ENCODE measurements at regions of chr5 and their contacts with region 1.

Region 1: DNA sequence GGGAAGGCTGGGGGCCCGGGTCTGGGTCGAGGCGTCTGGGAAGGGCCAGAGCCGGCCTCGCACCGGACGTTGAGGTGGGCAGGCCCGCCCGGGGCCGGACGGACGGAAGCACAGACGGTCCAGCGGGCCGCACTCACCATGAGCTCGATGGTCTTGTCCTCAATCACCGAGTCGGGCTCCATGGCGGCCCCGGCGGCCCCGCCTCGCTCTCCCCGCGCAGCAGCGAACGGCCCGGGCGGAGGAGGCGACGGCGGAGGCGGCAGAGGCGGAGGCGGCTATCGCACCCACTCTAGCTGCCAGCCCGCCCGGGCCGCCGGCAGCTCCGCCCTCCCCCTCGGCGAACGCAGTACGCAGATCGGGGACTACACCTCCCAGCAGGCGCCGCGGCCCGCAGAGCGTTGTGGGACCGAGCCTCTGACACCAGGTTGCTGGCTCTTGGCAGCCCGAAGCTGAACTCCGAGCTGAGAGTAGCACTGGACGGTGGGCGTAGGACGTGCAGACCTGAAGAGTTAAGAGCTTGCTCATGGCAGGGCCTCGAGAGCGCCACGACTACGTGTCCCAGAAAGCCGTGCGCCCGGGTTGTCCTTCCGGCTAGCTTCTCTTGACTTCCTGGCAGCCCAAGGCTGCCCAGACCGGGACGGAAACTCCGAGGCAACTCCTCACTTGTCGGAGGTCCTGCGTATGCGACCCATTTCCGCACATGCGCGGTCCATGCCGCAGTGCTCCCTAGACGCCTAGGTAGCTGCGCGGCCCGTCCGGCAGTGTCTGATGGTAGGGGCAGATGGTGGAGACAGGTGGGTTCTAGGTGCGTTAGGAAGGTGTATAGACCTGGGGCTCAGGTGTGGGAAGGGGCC is at the start of gene FBXW11:
- DNase-seq: peak; percentile 85 to 96 (median 92)
- ATAC-seq: peak; percentile 94
- H3K4me3 ChIP-seq: peak within 1 kb of the TSS; percentile 89
- H3K4me3 Mint-ChIP-seq: peak within 1 kb of the TSS; percentile 93 to 99 (median 97)
- H3K27ac ChIP-seq: peak within 1 kb of the TSS; percentile 91
- H3K27ac Mint-ChIP-seq: peak within 1 kb of the TSS; percentile 94 to 100 (median 98)
- H3K4me1 ChIP-seq: peaks cover 33 to 36% of the 10 kb centered on the region in 2 donors
- H3K4me1 Mint-ChIP-seq: peaks cover 34 to 67% (median 56%) of the 10 kb centered on the region in 7 donors
- H3K27me3 ChIP-seq: no peaks in the 10 kb centered on the region
- H3K27me3 Mint-ChIP-seq: no peaks in the 10 kb centered on the region
- total RNA-seq, gene FBXW11: 29.1 to 40.7 (median 33.6) TPM

Region 2: GRCh38 chr5:171907725-171908343 is 98.7 kb before region 1 on chr5:
- CTCF ChIA-PET with region 1: interaction called, 11 read pairs
- POLR2A ChIA-PET with region 1: interaction called, 5 read pairs
- intact Hi-C with region 1: loop called (anchors 1 to 2 kb)
- DNase-seq: peak in 7 of 9 donors; percentile 9 to 55 (median 45)
- ATAC-seq: peak; percentile 88
- H3K4me3 ChIP-seq: no peak overlapping the region
- H3K4me3 Mint-ChIP-seq: no peak overlapping the region
- H3K27ac ChIP-seq: no peak overlapping the region
- H3K27ac Mint-ChIP-seq: peak overlapping the region in 3 of 9 donors; percentile 0 to 75 (median 50)
- H3K4me1 ChIP-seq: peaks cover 0 to 23% of the 10 kb centered on the region in 2 donors
- H3K4me1 Mint-ChIP-seq: peaks cover 25 to 54% (median 48%) of the 10 kb centered on the region in 7 donors
- H3K27me3 ChIP-seq: no peaks in the 10 kb centered on the region
- H3K27me3 Mint-ChIP-seq: no peaks in the 10 kb centered on the region

Region 3: GRCh38 chr5:172035039-172035438 is 28.5 kb after region 1 on chr5:
- CTCF ChIA-PET with region 1: interaction called, 6 read pairs
- POLR2A ChIA-PET with region 1: no interaction called
- intact Hi-C with region 1: loop called (anchors 1 to 5 kb)
- DNase-seq: no peak
- ATAC-seq: peak; percentile 27
- H3K4me3 ChIP-seq: no peak overlapping the region
- H3K4me3 Mint-ChIP-seq: peak overlapping the region in 1 of 10 donors; percentile 20
- H3K27ac ChIP-seq: no peak overlapping the region
- H3K27ac Mint-ChIP-seq: no peak overlapping the region
- H3K4me1 ChIP-seq: no peaks in the 10 kb centered on the region
- H3K4me1 Mint-ChIP-seq: peaks cover 0 to 16% (median 9%) of the 10 kb centered on the region in 7 donors
- H3K27me3 ChIP-seq: no peaks in the 10 kb centered on the region
- H3K27me3 Mint-ChIP-seq: no peaks in the 10 kb centered on the region

Region 4: GRCh38 chr5:172114875-172115422 is 108.4 kb after region 1 on chr5:
- CTCF ChIA-PET with region 1: no interaction called
- POLR2A ChIA-PET with region 1: interaction called, 3 read pairs
- intact Hi-C with region 1: loop called (anchors 2 kb)
- DNase-seq: peak; percentile 35 to 78 (median 44)
- ATAC-seq: peak; percentile 70
- H3K4me3 ChIP-seq: peak overlapping the region; percentile 50
- H3K4me3 Mint-ChIP-seq: peak overlapping the region; percentile 54 to 90 (median 80)
- H3K27ac ChIP-seq: peak overlapping the region; percentile 70
- H3K27ac Mint-ChIP-seq: peak overlapping the region; percentile 75 to 98 (median 94)
- H3K4me1 ChIP-seq: peaks cover 67 to 80% of the 10 kb centered on the region in 2 donors
- H3K4me1 Mint-ChIP-seq: peaks cover 48 to 86% (median 72%) of the 10 kb centered on the region in 7 donors
- H3K27me3 ChIP-seq: no peaks in the 10 kb centered on the region
- H3K27me3 Mint-ChIP-seq: no peaks in the 10 kb centered on the region

Region 5: GRCh38 chr5:172283020-172283861 is 276.7 kb after region 1 on chr5 and contains the start of gene UBTD2:
- CTCF ChIA-PET with region 1: interaction called, 4 read pairs
- POLR2A ChIA-PET with region 1: interaction called, 3 read pairs
- intact Hi-C with region 1: loop called (anchors 1 kb)
- DNase-seq: peak in 7 of 9 donors; percentile 51 to 84 (median 67)
- ATAC-seq: peak; percentile 89
- H3K4me3 ChIP-seq: peak within 1 kb of the TSS; percentile 73
- H3K4me3 Mint-ChIP-seq: peak within 1 kb of the TSS; percentile 85 to 94 (median 90)
- H3K27ac ChIP-seq: peak within 1 kb of the TSS; percentile 61
- H3K27ac Mint-ChIP-seq: peak within 1 kb of the TSS; percentile 67 to 94 (median 75)
- H3K4me1 ChIP-seq: peaks cover 11 to 13% of the 10 kb centered on the region in 2 donors
- H3K4me1 Mint-ChIP-seq: peaks cover 10 to 34% (median 29%) of the 10 kb centered on the region in 7 donors
- H3K27me3 ChIP-seq: no peaks in the 10 kb centered on the region
- H3K27me3 Mint-ChIP-seq: peaks cover 0 to 24% (median 0%) of the 10 kb centered on the region in 5 donors
- total RNA-seq, gene UBTD2: 2.3 to 8.3 (median 5.9) TPM

Region 6: DNA sequence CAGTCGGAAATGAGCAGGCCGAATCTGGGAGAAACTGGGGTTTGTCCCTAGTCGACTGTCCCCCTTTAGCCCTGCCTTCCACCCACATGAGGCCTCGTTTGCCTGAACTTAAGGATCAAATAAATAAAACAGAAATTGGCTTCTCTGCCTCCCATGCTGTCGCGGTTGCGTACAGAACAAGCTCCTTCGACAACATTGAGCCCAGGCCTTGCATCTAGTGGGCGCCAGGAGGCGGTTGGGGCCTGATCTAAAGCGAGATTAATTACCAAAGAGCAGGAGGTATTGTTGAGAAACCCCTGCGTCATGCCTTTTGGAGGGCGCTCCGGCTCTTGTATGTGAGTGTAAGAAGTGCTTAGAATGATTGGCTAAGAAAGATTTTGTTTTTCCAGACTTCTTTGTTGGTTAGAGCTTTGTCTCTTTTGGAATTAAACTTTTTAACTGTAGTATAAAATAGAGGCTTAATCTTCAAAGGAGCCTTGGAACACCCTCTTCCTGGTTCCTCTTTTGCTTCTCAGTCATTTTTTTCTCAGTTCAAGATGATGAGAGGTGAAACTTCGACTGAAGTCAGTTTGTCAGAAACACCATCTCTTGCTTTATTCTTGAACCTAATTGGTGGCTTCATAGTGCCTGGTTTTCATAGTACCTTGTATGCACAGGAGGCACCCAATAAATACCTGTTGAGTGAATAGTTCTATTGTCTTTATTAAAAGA is 977.9 kb after region 1 on chr5:
- CTCF ChIA-PET with region 1: no interaction called
- POLR2A ChIA-PET with region 1: interaction called, 5 read pairs
- intact Hi-C with region 1: loop called in 1 of 2 experiments (anchors 2 kb)
- DNase-seq: peak; percentile 47 to 90 (median 82)
- ATAC-seq: peak; percentile 86
- H3K4me3 ChIP-seq: peak overlapping the region; percentile 64
- H3K4me3 Mint-ChIP-seq: peak overlapping the region; percentile 88 to 99 (median 97)
- H3K27ac ChIP-seq: peak overlapping the region; percentile 92
- H3K27ac Mint-ChIP-seq: peak overlapping the region; percentile 92 to 99 (median 98)
- H3K4me1 ChIP-seq: peaks cover 16 to 26% of the 10 kb centered on the region in 2 donors
- H3K4me1 Mint-ChIP-seq: peaks cover 20 to 71% (median 48%) of the 10 kb centered on the region in 7 donors
- H3K27me3 ChIP-seq: no peaks in the 10 kb centered on the region
- H3K27me3 Mint-ChIP-seq: no peaks in the 10 kb centered on the region

Region 7: GRCh38 chr5:173808134-173808808 is 1801.7 kb after region 1 on chr5:
- CTCF ChIA-PET with region 1: no interaction called
- POLR2A ChIA-PET with region 1: no interaction called
- intact Hi-C with region 1: no loop called
- DNase-seq: no peak
- ATAC-seq: peak; percentile 62
- H3K4me3 ChIP-seq: no peak overlapping the region
- H3K4me3 Mint-ChIP-seq: no peak overlapping the region
- H3K27ac ChIP-seq: no peak overlapping the region
- H3K27ac Mint-ChIP-seq: no peak overlapping the region
- H3K4me1 ChIP-seq: no peaks in the 10 kb centered on the region
- H3K4me1 Mint-ChIP-seq: peaks cover 0 to 4% (median 0%) of the 10 kb centered on the region in 7 donors
- H3K27me3 ChIP-seq: no peaks in the 10 kb centered on the region
- H3K27me3 Mint-ChIP-seq: peaks cover 0 to 15% (median 0%) of the 10 kb centered on the region in 5 donors

Region 8: GRCh38 chr5:173917788-173918786 is 1911.5 kb after region 1 on chr5:
- CTCF ChIA-PET with region 1: no interaction called
- POLR2A ChIA-PET with region 1: no interaction called
- intact Hi-C with region 1: loop called in 1 of 2 experiments (anchors 5 kb)
- DNase-seq: peak; percentile 14 to 89 (median 78)
- ATAC-seq: peak; percentile 92
- H3K4me3 ChIP-seq: peak overlapping the region; percentile 65
- H3K4me3 Mint-ChIP-seq: no peak overlapping the region
- H3K27ac ChIP-seq: peak overlapping the region; percentile 82
- H3K27ac Mint-ChIP-seq: no peak overlapping the region
- H3K4me1 ChIP-seq: peaks cover 4 to 11% of the 10 kb centered on the region in 2 donors
- H3K4me1 Mint-ChIP-seq: peaks cover 0 to 21% (median 6%) of the 10 kb centered on the region in 7 donors
- H3K27me3 ChIP-seq: no peaks in the 10 kb centered on the region
- H3K27me3 Mint-ChIP-seq: no peaks in the 10 kb centered on the region